Aorta (tissue), 5 donors: ENCODE measurements at regions of chr1 and their contacts with region 1.

Region 1: GRCh38 chr1:235415008-235415904 is 48.0 kb downstream of the TBCE start:
- DNase-seq: peak in 1 of 2 donors; percentile 72
- ATAC-seq: peak; percentile 73
- H3K4me3 ChIP-seq: no peak overlapping the region
- H3K27ac ChIP-seq: no peak overlapping the region
- H3K4me1 ChIP-seq: no peaks in the 10 kb centered on the region
- H3K27me3 ChIP-seq: no peaks in the 10 kb centered on the region

Region 2: DNA sequence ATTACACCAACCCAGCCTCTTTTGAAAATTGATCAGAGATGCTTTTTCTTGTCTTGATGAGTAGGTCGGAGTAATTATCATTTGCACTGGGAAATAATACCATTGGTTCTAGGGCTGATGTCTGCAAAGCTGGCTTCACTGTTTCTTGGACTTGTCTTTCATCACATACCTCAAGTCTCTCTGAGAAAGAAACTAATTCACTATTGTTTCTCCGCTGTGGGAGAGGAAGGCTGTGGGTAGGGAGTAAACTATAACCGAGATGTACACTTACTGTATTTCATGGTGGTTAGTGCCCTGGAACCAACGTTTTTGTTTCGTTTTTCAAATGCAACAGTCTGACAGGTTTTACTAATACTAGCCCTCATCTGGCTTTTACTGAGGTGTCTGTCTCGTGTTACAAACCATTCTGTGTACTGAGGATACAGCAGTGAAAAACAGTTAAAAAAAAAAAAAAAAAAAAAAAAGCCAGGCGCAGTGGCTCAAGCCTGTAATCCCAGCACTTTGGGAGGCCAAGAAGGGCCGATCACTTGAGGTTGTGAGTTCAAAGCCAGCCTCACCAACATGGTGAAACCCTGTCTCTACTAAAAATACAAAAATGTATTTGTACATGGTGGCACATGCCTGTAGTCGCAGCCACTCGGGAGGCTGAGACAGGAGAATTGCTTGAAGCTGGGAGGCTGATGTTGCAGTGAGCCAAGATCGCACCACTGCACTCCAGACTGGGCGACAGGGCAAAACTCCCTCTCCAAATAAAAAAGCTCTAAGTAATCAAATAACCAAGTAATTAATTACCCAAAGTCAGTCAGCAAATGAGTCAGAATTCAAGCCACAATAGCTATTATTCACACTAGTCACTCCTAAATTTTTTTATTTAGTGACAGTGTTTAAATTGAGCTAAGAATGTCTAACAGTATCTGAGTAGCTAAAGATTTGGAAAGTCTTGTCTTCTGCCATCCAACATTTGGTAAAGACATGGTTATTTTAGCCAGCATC is 309.9 kb before region 1 on chr1:
- intact Hi-C with region 1: loop called in 1 of 2 experiments (anchors 10 kb)
- DNase-seq: no peak
- ATAC-seq: no peak
- H3K4me3 ChIP-seq: no peak overlapping the region
- H3K27ac ChIP-seq: no peak overlapping the region
- H3K4me1 ChIP-seq: no peaks in the 10 kb centered on the region
- H3K27me3 ChIP-seq: no peaks in the 10 kb centered on the region

Region 3: GRCh38 chr1:235160957-235161684 is 254.1 kb before region 1 on chr1 and contains the start of gene RBM34:
- intact Hi-C with region 1: loop called in 1 of 2 experiments (anchors 10 kb)
- DNase-seq: peak; percentile 94 to 97
- ATAC-seq: peak; percentile 97
- H3K4me3 ChIP-seq: peak within 1 kb of the TSS; percentile 65 to 84
- H3K27ac ChIP-seq: peak within 1 kb of the TSS; percentile 79 to 84
- H3K4me1 ChIP-seq: no peaks in the 10 kb centered on the region
- H3K27me3 ChIP-seq: no peaks in the 10 kb centered on the region
- total RNA-seq, gene RBM34: 51.8 to 57.7 TPM

Region 4: DNA sequence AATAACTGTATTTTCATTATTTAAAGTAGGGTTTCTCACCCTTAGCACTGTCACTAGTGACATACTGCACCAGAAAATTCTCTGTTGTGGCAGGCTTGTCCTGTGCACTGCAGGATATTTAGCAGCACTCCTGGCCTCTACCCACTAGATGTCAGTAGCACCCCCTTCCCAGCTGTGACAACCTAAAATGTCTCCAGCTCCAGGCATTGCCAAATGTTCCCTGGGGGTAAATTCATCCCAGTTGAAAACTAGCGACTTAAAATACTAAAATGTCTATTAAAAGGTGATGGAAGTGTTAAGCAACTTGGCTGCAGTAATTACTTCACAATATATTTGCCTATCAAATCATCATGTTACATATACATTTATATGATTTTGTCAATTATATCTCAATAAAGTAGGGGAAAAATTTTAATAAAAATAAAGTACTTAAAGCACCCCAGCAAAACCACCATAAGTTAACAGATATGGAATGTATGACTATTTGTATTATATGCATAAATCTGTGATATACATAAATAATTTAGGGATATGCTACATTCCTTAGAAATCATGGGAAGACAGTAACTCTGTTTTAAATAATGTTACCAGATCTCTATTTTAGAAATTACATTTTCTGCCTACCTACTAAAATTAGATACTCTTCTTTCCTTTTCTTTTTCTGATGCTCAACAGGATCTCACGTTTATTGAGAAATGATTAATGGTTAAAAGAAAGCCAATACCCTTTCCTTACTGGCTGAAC is 161.9 kb before region 1 on chr1:
- intact Hi-C with region 1: loop called (anchors 2 to 5 kb)
- DNase-seq: peak in 1 of 2 donors; percentile 64
- ATAC-seq: peak; percentile 83
- H3K4me3 ChIP-seq: no peak overlapping the region
- H3K27ac ChIP-seq: no peak overlapping the region
- H3K4me1 ChIP-seq: no peaks in the 10 kb centered on the region
- H3K27me3 ChIP-seq: no peaks in the 10 kb centered on the region